ENCODE measurements at regions of chr3 and their contacts with region 1.

Region 1: GRCh38 chr3:101573449-101574387 is at the start of gene PCNP:
- DNase-seq: peak; percentile 79 to 97 (median 86)
- ATAC-seq: peak; percentile 83
- H3K4me3 ChIP-seq: peak within 1 kb of the TSS; percentile 96
- H3K27ac ChIP-seq: peak within 1 kb of the TSS; percentile 97
- H3K4me1 ChIP-seq: peaks cover 13 to 16% of the 10 kb centered on the region in 2 experiments; a peak in 4 of 5 replicates
- H3K27me3 ChIP-seq: no peaks in the 10 kb centered on the region
- CTCF ChIP-seq: peak; percentile 59 to 83 (median 82); a peak in 5 of 6 replicates
- EP300 ChIP-seq: no peak
- POLR2A ChIP-seq: peak; percentile 89
- RAD21 ChIP-seq: peak; percentile 61 to 62
- polyA plus RNA-seq, gene PCNP: 151 to 170 TPM

Region 2: GRCh38 chr3:101561630-101562328 is 11.9 kb before region 1 on chr3 and contains the start of gene TRMT10C:
- CTCF ChIA-PET with region 1: no interaction called
- POLR2A ChIA-PET with region 1: interaction called, 22 read pairs
- in situ Hi-C with region 1: no loop called
- intact Hi-C with region 1: no loop called
- DNase-seq: peak; percentile 75 to 93 (median 80)
- ATAC-seq: peak; percentile 95
- H3K4me3 ChIP-seq: peak within 1 kb of the TSS; percentile 94
- H3K27ac ChIP-seq: peak within 1 kb of the TSS; percentile 96
- H3K4me1 ChIP-seq: peaks cover under 1 to 8% of the 10 kb centered on the region in 2 experiments; a peak in 3 of 5 replicates
- H3K27me3 ChIP-seq: no peaks in the 10 kb centered on the region
- CTCF ChIP-seq: no peak
- EP300 ChIP-seq: 0 out of 2 replicates have a peak, but pooled peaks have one; percentile 29
- POLR2A ChIP-seq: peak; percentile 91
- RAD21 ChIP-seq: 0 out of 4 replicates have a peak, but pooled peaks of 1 of the 2 experiments have one; percentile 3
- polyA plus RNA-seq, gene TRMT10C: 101 to 106 TPM

Region 3: DNA sequence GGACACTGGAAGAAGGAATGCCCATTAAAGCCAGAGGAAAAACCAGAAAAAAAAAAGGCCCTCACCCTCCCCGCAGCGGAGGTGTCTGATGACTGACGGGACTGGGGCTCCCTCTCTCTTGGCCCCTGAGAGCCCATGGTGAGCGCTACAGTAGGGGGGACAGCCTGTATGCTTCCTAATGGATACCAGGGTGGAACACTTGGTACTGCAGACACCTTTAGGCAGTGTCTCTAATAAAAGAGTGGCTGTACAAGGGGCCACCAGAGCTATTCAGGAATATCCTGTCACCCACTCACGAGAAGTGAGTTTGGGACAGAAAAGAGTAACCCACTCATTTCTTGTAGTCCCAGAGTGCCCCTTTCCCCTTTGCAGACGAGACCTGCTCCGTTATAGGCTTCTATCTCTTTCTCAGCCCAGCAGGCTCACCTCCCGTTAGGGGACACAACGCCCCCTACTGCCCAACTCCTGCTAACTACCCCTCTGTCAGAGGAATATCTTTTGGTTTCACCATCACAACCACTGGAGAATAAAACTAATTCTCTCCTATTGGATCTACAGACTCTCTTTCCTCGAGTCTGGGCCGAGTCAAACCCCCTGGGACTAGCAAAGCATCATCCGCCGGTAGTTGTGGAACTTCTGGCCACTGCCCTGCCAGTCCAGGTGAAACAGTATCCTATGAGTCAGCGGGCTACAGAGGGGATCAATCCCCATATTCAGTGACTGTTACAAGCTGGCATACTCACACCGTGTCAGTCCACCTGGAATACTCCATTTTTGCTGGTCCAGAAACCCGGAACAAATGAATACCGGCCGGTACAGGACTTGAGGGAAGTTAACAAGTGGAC is 62.5 kb after region 1 on chr3:
- CTCF ChIA-PET with region 1: interaction called, 9 read pairs
- POLR2A ChIA-PET with region 1: interaction called, 4 read pairs
- in situ Hi-C with region 1: no loop called
- intact Hi-C with region 1: loop called (anchors 1 kb)
- DNase-seq: peak; percentile 40 to 85 (median 56)
- ATAC-seq: peak; percentile 69
- H3K4me3 ChIP-seq: peak overlapping the region; percentile 63
- H3K27ac ChIP-seq: peak overlapping the region; percentile 86
- H3K4me1 ChIP-seq: peaks cover 0 to 5% of the 10 kb centered on the region in 2 experiments; a peak in 3 of 5 replicates
- H3K27me3 ChIP-seq: no peaks in the 10 kb centered on the region
- CTCF ChIP-seq: peak; percentile 54 to 73 (median 72)
- EP300 ChIP-seq: no peak
- POLR2A ChIP-seq: no peak
- RAD21 ChIP-seq: peak in 1 of 2 experiments; percentile 51; a peak in 3 of 4 replicates

Region 4: GRCh38 chr3:101685870-101686412 is 112.2 kb after region 1 on chr3:
- CTCF ChIA-PET with region 1: no interaction called
- POLR2A ChIA-PET with region 1: interaction called, 4 read pairs
- in situ Hi-C with region 1: loop called (anchors 10 kb)
- intact Hi-C with region 1: loop called (anchors 2 kb)
- DNase-seq: peak in 1 of 4 experiments; percentile 10
- ATAC-seq: peak; percentile 5
- H3K4me3 ChIP-seq: peak overlapping the region; percentile 86
- H3K27ac ChIP-seq: peak overlapping the region; percentile 98
- H3K4me1 ChIP-seq: peaks cover 6 to 9% of the 10 kb centered on the region in 2 experiments; a peak in 3 of 5 replicates
- H3K27me3 ChIP-seq: no peaks in the 10 kb centered on the region
- CTCF ChIP-seq: no peak
- EP300 ChIP-seq: no peak
- POLR2A ChIP-seq: no peak
- RAD21 ChIP-seq: no peak

Region 5: DNA sequence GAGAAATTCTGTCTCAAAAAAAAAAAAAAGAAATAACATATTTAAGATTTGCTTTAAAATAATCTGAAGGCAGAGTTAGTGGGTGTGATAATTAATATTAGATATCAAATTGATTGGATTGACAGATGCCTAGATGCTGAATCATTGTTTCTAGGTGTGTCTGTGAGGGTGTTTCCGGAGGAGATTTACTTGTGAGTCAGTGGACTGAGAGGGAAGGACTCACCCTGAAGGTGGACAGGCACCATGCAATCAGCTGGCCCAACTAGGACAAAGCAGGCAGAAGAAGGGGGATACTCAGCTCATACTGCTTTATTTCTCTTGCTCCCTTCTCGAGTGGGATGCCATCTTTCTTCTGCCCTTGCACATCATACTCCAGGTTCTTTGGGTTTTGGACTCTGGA is 129.5 kb after region 1 on chr3:
- CTCF ChIA-PET with region 1: no interaction called
- POLR2A ChIA-PET with region 1: no interaction called
- in situ Hi-C with region 1: no loop called
- intact Hi-C with region 1: no loop called
- DNase-seq: no peak
- ATAC-seq: peak; percentile 84
- H3K4me3 ChIP-seq: no peak overlapping the region
- H3K27ac ChIP-seq: no peak overlapping the region
- H3K4me1 ChIP-seq: no peaks in the 10 kb centered on the region; a peak in 1 of 5 replicates
- H3K27me3 ChIP-seq: no peaks in the 10 kb centered on the region
- CTCF ChIP-seq: no peak
- EP300 ChIP-seq: no peak
- POLR2A ChIP-seq: no peak
- RAD21 ChIP-seq: no peak